AG04450 (cell line): ENCODE measurements at regions of chr7 and their contacts with region 1.

Region 1: DNA sequence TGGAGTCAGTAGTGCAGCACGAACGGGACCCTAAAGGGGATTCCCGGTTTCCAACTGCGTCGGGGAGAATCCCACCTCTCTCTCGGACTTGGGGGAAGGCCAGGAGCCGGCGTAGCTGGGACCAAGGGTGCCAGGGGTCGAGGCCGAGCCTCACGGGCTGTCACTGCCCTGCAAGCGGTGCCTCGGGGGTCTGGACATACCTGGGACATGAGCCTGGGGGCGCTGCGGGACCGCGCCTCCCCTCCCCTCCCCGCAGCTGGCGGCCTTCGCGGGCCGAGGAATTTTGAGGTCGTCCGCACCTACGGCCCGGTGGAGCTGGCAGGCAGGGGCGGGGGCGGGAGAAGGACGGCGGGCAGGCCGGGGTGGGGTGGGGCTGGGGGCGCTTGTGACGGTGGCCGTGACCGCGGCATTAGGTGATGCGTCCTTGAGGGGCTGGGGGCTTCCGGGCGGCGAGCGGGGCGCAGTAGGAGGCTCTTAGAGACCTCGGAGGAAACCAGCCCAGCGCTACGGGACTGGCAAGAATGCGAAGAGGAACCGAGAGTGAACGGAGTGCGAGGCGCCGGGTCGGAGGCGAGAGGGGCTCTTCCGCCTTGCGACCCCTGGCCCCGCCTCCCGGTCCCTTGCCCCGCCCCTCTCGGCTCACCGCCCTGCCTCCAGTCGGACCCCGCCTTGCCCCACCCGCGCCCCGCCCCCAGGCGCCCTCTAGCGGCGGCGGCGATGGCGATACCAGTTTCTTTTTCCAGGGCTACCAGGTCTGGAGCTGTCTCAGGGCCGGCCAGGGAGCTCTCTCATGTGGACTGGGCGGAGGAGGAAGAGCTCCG is 48.3 kb downstream of the NPVF start:
- DNase-seq: peak; percentile 49
- H3K4me3 ChIP-seq: peak overlapping the region; percentile 86
- H3K27ac ChIP-seq: peak overlapping the region; percentile 21
- H3K27me3 ChIP-seq: no peaks in the 10 kb centered on the region
- CTCF ChIP-seq: peak; percentile 60

Region 2: GRCh38 chr7:25125137-25125946 is 54.6 kb before region 1 on chr7 and contains the start of gene CYCS:
- CTCF ChIA-PET with region 1: interaction called, 12 read pairs
- POLR2A ChIA-PET with region 1: interaction called, 11 read pairs
- DNase-seq: peak; percentile 100
- H3K4me3 ChIP-seq: peak within 1 kb of the TSS; percentile 98
- H3K27ac ChIP-seq: peak within 1 kb of the TSS; percentile 77
- H3K27me3 ChIP-seq: peaks cover 3% of the 10 kb centered on the region
- CTCF ChIP-seq: no peak
- polyA plus RNA-seq, gene CYCS: 63.1 and 74.1 TPM in 2 replicates

Region 3: GRCh38 chr7:25139536-25139935 is 40.4 kb before region 1 on chr7:
- CTCF ChIA-PET with region 1: interaction called, 11 read pairs
- POLR2A ChIA-PET with region 1: no interaction called
- DNase-seq: no peak
- H3K4me3 ChIP-seq: no peak overlapping the region
- H3K27ac ChIP-seq: no peak overlapping the region
- H3K27me3 ChIP-seq: no peaks in the 10 kb centered on the region
- CTCF ChIP-seq: no peak

Region 4: GRCh38 chr7:25148772-25149575 is 31.0 kb before region 1 on chr7:
- CTCF ChIA-PET with region 1: interaction called, 16 read pairs
- POLR2A ChIA-PET with region 1: no interaction called
- DNase-seq: no peak
- H3K4me3 ChIP-seq: no peak overlapping the region
- H3K27ac ChIP-seq: no peak overlapping the region
- H3K27me3 ChIP-seq: no peaks in the 10 kb centered on the region
- CTCF ChIP-seq: no peak

Region 5: DNA sequence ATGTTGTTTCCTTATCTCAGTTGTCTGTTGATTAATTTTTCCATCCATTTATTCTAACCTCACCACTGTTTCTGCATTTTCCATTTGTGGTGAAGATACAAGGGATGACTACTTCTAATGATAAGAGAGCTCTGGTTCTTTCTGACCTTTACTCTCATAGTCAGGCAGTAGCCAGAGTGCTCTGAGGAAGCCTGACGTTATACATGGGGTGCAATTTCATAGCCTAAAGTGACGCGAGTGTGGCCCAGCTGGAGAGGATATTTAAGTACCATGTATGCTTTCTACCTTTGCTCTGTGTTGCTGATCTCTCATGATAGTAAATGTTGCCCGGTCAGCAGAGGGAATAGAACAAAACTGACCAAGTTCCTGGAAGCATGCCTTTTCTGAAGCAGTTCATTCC is 21.0 kb before region 1 on chr7:
- CTCF ChIA-PET with region 1: interaction called, 20 read pairs
- POLR2A ChIA-PET with region 1: no interaction called
- DNase-seq: no peak
- H3K4me3 ChIP-seq: no peak overlapping the region
- H3K27ac ChIP-seq: no peak overlapping the region
- H3K27me3 ChIP-seq: no peaks in the 10 kb centered on the region
- CTCF ChIP-seq: no peak

Region 6: GRCh38 chr7:25196132-25196891 is 16.3 kb after region 1 on chr7:
- CTCF ChIA-PET with region 1: interaction called, 35 read pairs
- POLR2A ChIA-PET with region 1: no interaction called
- DNase-seq: no peak
- H3K4me3 ChIP-seq: no peak overlapping the region
- H3K27ac ChIP-seq: no peak overlapping the region
- H3K27me3 ChIP-seq: peaks cover 4% of the 10 kb centered on the region
- CTCF ChIP-seq: no peak

Region 7: DNA sequence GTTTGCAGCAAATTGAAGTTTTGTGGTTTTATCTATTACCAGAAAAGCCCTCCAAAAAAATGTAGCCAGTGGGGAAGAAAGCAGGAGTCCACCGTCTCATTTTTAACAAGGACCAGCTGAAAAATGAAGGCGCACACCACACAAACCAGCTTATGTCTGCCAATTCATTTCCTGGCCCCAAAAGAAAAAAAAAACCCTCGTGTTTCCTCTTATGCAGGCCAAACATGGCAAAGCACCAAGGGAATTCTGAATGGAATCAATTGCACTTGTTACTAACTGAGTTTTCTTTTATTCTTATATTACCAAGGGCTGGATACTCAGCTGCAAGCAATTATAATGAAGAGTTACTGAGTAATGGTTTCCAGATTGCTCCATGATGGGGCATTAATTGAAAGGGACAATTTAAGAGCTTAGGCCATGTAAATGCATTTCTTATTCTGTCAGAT is 476.6 kb after region 1 on chr7:
- CTCF ChIA-PET with region 1: no interaction called
- POLR2A ChIA-PET with region 1: no interaction called
- DNase-seq: no peak
- H3K4me3 ChIP-seq: no peak overlapping the region
- H3K27ac ChIP-seq: no peak overlapping the region
- H3K27me3 ChIP-seq: peaks cover 5% of the 10 kb centered on the region
- CTCF ChIP-seq: no peak

Region 8: GRCh38 chr7:26623521-26623920 is 1443.5 kb after region 1 on chr7:
- CTCF ChIA-PET with region 1: interaction called, 10 read pairs
- POLR2A ChIA-PET with region 1: no interaction called
- DNase-seq: no peak
- H3K4me3 ChIP-seq: no peak overlapping the region
- H3K27ac ChIP-seq: no peak overlapping the region
- H3K27me3 ChIP-seq: peaks cover 14% of the 10 kb centered on the region
- CTCF ChIP-seq: no peak